Right ventricle myocardium superior (tissue), 1 donor: ENCODE measurements at regions of chrX and their contacts with region 1.

Region 1: DNA sequence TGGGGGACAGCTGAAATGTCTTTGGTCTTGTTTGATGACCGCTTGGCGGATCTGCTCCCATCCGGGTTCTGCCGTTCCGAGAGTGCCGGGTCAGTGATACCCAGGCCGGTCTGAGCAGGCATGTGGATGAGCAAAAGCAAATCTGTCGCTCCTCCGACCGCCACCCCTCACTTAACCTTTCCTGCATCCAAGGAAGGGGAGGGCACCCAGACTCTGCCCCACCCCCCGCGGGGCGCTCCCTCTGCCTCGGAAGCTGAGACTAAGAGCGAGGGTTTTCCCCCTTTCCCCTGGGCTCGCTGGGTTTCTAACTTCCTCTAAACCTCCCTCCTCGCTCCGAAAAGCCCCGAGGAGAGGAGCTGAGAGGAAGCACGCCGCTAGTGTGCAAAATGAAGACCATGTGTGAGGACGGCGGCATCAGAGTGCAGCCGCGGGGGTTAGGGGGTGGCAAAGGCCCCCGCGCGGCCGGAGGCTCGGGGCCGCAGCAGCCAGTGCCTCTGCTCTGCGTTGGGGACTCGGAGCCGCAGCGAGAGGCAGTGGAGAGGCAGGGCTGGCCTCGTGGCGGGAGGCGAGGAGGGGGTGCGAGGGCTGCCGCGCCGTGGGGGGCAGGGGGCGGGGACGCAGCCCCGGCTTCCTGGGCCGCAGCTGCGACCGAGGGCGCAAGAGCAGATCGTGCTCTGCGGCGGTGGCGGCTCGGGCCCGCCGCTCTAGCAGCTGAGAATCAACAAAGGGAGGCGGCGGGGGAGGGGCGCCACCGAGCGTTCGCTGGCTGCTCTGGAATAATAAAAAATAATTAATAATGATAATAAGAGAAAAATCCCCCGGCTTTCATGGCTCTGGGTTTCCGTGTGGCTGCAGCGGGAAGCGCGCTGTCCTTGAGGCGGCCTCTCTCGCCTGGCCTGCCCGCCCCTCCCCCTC is 55.8 kb upstream of the BCOR start:
- DNase-seq: peak; percentile 72
- ATAC-seq: peak; percentile 30

Region 2: DNA sequence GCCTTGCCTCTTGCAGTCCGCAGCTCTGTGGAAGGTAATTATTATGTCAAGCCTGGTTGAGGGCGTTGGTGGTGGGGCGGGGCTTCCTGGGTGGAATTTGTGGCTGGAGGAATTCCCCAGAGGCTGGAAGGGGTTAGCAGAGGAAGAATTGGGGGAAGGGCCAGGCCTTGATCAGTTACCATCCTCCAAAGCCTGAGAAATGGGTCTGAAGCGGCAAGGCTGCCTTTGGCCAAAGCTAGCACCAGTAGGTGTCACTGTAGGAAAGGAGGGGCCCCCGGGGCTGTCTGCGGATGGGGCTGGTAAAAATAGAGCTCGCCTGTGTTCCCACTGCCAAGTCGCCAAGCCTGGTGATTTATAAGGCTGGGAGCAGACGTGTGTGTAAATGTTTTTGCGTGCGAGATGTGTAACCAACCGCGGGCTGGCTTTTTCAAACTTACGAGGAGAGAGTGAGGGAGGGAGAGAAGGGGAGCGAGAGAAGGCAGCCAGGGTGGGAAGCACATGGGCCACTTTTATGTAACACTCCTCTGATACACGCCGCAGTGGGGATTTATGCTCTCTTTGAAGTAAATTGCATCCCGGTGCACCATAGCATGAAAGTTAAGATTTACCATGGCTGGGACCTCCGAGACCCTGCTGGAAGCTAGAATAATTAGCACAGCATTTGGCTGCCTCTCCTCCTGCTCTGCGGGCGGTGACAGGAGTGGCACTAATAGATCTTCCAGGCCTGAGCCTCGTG is 422.8 kb before region 1 on chrX:
- intact Hi-C with region 1: loop called (anchors 10 kb)
- DNase-seq: peak; percentile 73
- ATAC-seq: peak; percentile 86

Region 3: GRCh38 chrX:39907964-39908616 is 245.5 kb before region 1 on chrX:
- intact Hi-C with region 1: no loop called
- DNase-seq: peak; percentile 61
- ATAC-seq: peak; percentile 89

Region 4: DNA sequence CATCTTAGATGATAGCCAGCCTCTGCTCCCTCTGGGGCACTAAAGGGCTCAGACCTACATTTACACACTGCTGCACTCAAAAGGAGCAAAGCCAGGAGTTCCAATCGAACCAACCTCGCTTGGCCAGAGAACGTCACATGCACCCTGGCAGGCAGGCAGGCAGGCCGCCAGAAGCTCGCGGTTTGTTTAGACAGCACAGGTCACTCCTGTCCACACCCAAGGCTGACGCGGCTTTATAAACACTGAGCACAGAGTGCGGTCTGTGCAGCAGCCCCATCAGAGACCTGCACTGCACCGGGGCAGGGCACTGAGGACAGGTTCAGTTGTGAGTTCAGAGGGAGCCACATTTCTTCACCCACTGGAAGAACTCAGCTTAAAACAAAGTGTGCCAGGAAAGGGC is 199.7 kb before region 1 on chrX:
- intact Hi-C with region 1: no loop called
- DNase-seq: peak; percentile 86
- ATAC-seq: peak; percentile 94

Region 5: GRCh38 chrX:40013266-40014195 is 140.1 kb before region 1 on chrX:
- intact Hi-C with region 1: loop called (anchors 10 kb)
- DNase-seq: peak; percentile 81
- ATAC-seq: peak; percentile 64

Region 6: GRCh38 chrX:40097497-40098263 is 55.9 kb before region 1 on chrX and contains the start of gene BCOR:
- intact Hi-C with region 1: loop called (anchors 5 kb)
- DNase-seq: peak; percentile 79
- ATAC-seq: peak; percentile 65
- total RNA-seq, gene BCOR: 14.0 TPM